SK-N-SH (cell line): ENCODE measurements at regions of chr16 and their contacts with region 1.

Region 1: DNA sequence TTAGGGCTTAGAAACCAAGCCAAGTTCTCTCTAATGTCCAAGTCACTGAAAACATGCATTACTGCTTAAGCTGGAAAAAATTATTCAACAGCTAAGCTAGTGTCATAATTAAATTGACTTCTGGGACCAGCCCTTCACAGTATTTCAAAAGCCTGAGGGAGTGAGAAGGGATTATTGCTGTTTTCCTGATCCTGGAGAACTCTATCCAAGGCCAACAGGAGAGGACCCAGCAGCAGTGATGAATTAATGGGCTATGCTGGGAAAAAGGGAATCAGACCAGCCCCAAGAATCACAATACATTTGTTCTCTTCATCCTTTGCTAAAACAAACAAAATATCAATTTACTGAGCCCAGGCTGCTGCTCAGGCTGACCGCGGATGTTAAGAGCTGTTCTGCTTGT is 34.5 kb upstream of the CLEC3A start:
- DNase-seq: no peak
- H3K4me3 ChIP-seq: no peak overlapping the region
- H3K27ac ChIP-seq: no peak overlapping the region
- H3K4me1 ChIP-seq: peaks cover 0 to 2% of the 10 kb centered on the region in 2 experiments; a peak in 1 of 4 replicates
- H3K27me3 ChIP-seq: no peaks in the 10 kb centered on the region
- CTCF ChIP-seq: no peak
- EP300 ChIP-seq: no peak
- RAD21 ChIP-seq: no peak

Region 2: GRCh38 chr16:78002915-78003538 is 15.2 kb after region 1 on chr16:
- CTCF ChIA-PET with region 1: interaction called, 10 read pairs
- POLR2A ChIA-PET with region 1: no interaction called
- DNase-seq: peak; percentile 85
- H3K4me3 ChIP-seq: peak overlapping the region in 1 of 2 experiments; percentile 14; a peak in 1 of 4 replicates
- H3K27ac ChIP-seq: no peak overlapping the region
- H3K4me1 ChIP-seq: no peaks in the 10 kb centered on the region; a peak in 1 of 4 replicates
- H3K27me3 ChIP-seq: no peaks in the 10 kb centered on the region
- CTCF ChIP-seq: peak; percentile 92
- EP300 ChIP-seq: peak in 1 of 2 experiments; percentile 44; a peak in 1 of 4 replicates
- RAD21 ChIP-seq: peak; percentile 86